ENCODE measurements at regions of chr4 and their contacts with region 1.

Region 1: GRCh38 chr4:99054428-99054994 is 34.1 kb downstream of the ADH5 start:
- ATAC-seq: peak in 2 of 8 experiments; percentile 17 to 18
- H3K4me3 ChIP-seq: no peak overlapping the region
- H3K27ac ChIP-seq: no peak overlapping the region
- H3K4me1 ChIP-seq: no peaks in the 10 kb centered on the region

Region 2: GRCh38 chr4:98068495-98068894 is 986.0 kb before region 1 on chr4:
- in situ Hi-C with region 1: no loop called
- ATAC-seq: no peak
- H3K4me3 ChIP-seq: no peak overlapping the region
- H3K27ac ChIP-seq: no peak overlapping the region
- H3K4me1 ChIP-seq: no peaks in the 10 kb centered on the region

Region 3: DNA sequence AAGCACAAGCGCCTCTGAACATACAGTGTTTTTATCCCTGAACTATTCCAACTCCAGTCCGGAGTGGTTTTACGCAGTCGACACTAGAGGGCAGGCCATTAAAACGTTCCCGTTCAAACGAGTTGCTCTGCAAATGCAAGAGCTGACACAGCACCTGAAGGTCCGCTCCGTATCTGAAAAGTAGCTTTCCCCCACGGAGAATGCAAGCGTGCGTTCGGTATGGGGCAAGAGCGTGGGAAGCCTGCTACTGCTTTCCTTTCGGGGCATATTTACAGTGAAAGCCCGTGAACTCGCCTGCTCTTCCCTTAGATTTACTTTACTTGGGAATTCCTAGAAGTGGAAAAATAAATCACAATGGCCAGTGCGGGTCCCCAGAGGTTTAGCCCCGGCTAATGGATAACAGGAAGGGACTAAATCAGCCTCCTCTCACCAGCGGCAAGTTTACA is 586.9 kb before region 1 on chr4:
- in situ Hi-C with region 1: loop called in 2 of 9 experiments (anchors 25 kb)
- ATAC-seq: peak; percentile 93 to 99 (median 97)
- H3K4me3 ChIP-seq: peak overlapping the region; percentile 9 to 35 (median 32)
- H3K27ac ChIP-seq: peak overlapping the region in 1 of 2 donors; percentile 26
- H3K4me1 ChIP-seq: peaks cover 17 to 18% of the 10 kb centered on the region in 2 donors

Region 4: DNA sequence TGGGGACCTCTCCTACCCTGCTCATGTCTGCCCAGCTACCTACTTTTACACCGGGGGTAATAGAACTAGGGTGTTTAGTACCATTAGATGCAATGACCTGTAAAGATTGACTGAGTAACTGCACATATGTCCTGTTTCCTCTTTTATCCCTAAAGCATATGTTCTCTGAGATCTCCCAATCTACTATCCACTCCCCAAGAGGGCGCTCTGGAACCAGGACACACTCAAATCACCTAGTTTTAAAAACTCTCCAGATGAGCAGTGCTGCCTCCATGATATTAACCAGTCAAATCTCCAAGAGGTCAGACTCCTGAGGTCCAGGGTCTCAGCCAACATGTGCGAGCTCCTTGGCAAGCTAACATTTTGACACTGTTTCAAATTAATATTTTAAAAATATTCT is 309.1 kb before region 1 on chr4:
- in situ Hi-C with region 1: loop called in 1 of 9 experiments (anchors 25 kb)
- ATAC-seq: peak in 2 of 8 experiments; percentile 33 to 72
- H3K4me3 ChIP-seq: no peak overlapping the region
- H3K27ac ChIP-seq: no peak overlapping the region
- H3K4me1 ChIP-seq: peaks cover 10 to 11% of the 10 kb centered on the region in 2 donors

Region 5: DNA sequence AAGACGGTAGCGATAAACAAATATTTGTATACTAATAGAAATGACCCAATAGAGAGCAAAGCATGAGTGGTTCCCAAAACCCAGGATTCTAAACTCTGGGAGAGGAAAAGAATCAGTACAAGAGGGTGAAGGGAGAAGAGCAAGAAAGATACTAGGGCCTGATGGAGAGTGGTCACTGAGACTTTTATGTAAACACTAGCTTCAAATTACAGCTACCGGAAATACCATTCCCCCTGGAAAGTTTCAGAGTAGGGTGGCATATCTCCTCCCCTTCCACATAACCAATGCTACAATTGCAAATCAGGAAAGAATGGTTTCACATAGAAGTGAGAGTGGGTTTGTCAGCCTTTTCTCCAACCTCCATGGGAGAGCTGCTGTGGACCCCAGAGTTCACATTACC is 202.7 kb before region 1 on chr4:
- in situ Hi-C with region 1: no loop called
- ATAC-seq: peak in 1 of 8 experiments; percentile 41
- H3K4me3 ChIP-seq: no peak overlapping the region
- H3K27ac ChIP-seq: no peak overlapping the region
- H3K4me1 ChIP-seq: no peaks in the 10 kb centered on the region

Region 6: DNA sequence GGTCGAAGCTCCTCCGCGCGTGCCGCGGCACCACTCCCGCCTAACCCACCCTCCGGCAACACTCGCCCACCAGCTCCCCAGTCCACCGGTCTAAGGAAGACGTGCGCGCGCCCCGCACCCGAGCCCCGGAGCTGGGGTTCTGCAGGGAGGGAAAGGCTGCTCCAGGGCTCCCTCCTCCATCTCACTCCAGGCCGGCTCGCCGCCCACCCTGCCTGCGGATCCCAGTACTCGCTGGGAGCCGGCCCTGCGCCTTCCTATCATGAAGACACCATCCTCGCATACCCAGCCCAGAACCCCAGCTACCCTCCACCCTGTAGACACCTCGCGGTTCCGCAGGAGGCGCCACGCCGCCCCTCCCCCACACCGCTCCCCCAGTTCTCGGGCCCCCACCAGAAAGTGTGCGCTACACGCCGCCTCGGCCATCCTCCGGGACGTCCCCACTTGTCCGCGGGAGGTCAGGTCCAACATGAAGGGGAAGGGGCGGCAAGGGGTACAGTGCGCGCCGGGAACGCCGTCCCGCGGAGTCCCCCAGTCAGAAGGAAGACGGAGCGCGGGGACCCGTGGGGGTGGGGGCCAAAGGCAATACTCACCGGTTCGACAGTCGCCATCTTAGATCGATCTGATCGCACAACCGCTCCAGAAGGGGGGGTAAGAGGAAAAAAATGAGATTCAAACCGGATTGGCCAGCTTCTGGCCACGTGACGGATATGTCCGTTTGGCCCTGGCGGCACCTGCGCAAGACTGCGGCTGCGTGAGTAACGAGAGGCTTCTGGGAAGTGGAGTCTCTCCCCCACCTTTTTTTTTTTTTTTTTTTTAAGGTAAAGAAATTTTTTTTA is 125.8 kb before region 1 on chr4 and contains the start of gene EIF4E:
- in situ Hi-C with region 1: loop called in 1 of 9 experiments (anchors 25 kb)
- ATAC-seq: peak; percentile 65 to 84 (median 78)
- H3K4me3 ChIP-seq: peak within 1 kb of the TSS; percentile 71 to 98 (median 93)
- H3K27ac ChIP-seq: peak within 1 kb of the TSS; percentile 96 to 97
- H3K4me1 ChIP-seq: peaks cover 0 to 7% of the 10 kb centered on the region in 2 donors
- total RNA-seq, gene EIF4E: 92.2 to 168 (median 109) TPM

Region 7: GRCh38 chr4:99383833-99384392 is 329.4 kb after region 1 on chr4:
- in situ Hi-C with region 1: no loop called
- ATAC-seq: peak in 2 of 8 experiments; percentile 72 to 97
- H3K4me3 ChIP-seq: no peak overlapping the region
- H3K27ac ChIP-seq: no peak overlapping the region
- H3K4me1 ChIP-seq: no peaks in the 10 kb centered on the region

Measured in motor neuron (in vitro differentiated cells).